ENCODE measurements at regions of chr9 and their contacts with region 1.

Region 1: GRCh38 chr9:16543686-16544085 is 326.8 kb downstream of the BNC2 start:
- DNase-seq: no peak
- ATAC-seq: no peak
- H3K4me3 ChIP-seq: no peak overlapping the region
- H3K27ac ChIP-seq: no peak overlapping the region
- H3K4me1 ChIP-seq: no peaks in the 10 kb centered on the region
- H3K27me3 ChIP-seq: no peaks in the 10 kb centered on the region
- CTCF ChIP-seq: no peak
- EP300 ChIP-seq: no peak
- POLR2A ChIP-seq: no peak
- RAD21 ChIP-seq: no peak

Region 2: GRCh38 chr9:16289639-16290038 is 254.0 kb before region 1 on chr9:
- CTCF ChIA-PET with region 1: no interaction called
- POLR2A ChIA-PET with region 1: no interaction called
- RAD21 ChIA-PET with region 1: no interaction called
- SMC1A ChIA-PET with region 1: no interaction called
- in situ Hi-C with region 1: no loop called
- intact Hi-C with region 1: no loop called
- DNase-seq: peak; percentile 31
- ATAC-seq: peak; percentile 41; the same call in 2 of the 3 replicates
- H3K4me3 ChIP-seq: no peak overlapping the region
- H3K27ac ChIP-seq: no peak overlapping the region
- H3K4me1 ChIP-seq: no peaks in the 10 kb centered on the region; the same call in 1 of the 2 replicates
- H3K27me3 ChIP-seq: no peaks in the 10 kb centered on the region
- CTCF ChIP-seq: no peak
- EP300 ChIP-seq: no peak
- POLR2A ChIP-seq: no peak
- RAD21 ChIP-seq: no peak

Region 3: GRCh38 chr9:16368237-16369087 is 175.2 kb before region 1 on chr9:
- CTCF ChIA-PET with region 1: no interaction called
- POLR2A ChIA-PET with region 1: no interaction called
- RAD21 ChIA-PET with region 1: no interaction called
- SMC1A ChIA-PET with region 1: no interaction called
- in situ Hi-C with region 1: no loop called
- intact Hi-C with region 1: no loop called
- DNase-seq: no peak
- ATAC-seq: no peak
- H3K4me3 ChIP-seq: no peak overlapping the region
- H3K27ac ChIP-seq: no peak overlapping the region
- H3K4me1 ChIP-seq: no peaks in the 10 kb centered on the region
- H3K27me3 ChIP-seq: no peaks in the 10 kb centered on the region; a peak in 1 of 4 replicates
- CTCF ChIP-seq: no peak
- EP300 ChIP-seq: no peak
- POLR2A ChIP-seq: no peak
- RAD21 ChIP-seq: no peak

Region 4: GRCh38 chr9:16530669-16531642 is 12.7 kb before region 1 on chr9:
- CTCF ChIA-PET with region 1: interaction called, 6 read pairs
- POLR2A ChIA-PET with region 1: interaction called, 3 read pairs
- RAD21 ChIA-PET with region 1: interaction called, 3 read pairs
- SMC1A ChIA-PET with region 1: interaction called, 10 read pairs
- in situ Hi-C with region 1: no loop called
- intact Hi-C with region 1: no loop called
- DNase-seq: no peak
- ATAC-seq: no peak; the same call in 1 of the 3 replicates
- H3K4me3 ChIP-seq: no peak overlapping the region
- H3K27ac ChIP-seq: no peak overlapping the region
- H3K4me1 ChIP-seq: no peaks in the 10 kb centered on the region
- H3K27me3 ChIP-seq: no peaks in the 10 kb centered on the region
- CTCF ChIP-seq: no peak
- EP300 ChIP-seq: no peak
- POLR2A ChIP-seq: no peak
- RAD21 ChIP-seq: no peak

Region 5: DNA sequence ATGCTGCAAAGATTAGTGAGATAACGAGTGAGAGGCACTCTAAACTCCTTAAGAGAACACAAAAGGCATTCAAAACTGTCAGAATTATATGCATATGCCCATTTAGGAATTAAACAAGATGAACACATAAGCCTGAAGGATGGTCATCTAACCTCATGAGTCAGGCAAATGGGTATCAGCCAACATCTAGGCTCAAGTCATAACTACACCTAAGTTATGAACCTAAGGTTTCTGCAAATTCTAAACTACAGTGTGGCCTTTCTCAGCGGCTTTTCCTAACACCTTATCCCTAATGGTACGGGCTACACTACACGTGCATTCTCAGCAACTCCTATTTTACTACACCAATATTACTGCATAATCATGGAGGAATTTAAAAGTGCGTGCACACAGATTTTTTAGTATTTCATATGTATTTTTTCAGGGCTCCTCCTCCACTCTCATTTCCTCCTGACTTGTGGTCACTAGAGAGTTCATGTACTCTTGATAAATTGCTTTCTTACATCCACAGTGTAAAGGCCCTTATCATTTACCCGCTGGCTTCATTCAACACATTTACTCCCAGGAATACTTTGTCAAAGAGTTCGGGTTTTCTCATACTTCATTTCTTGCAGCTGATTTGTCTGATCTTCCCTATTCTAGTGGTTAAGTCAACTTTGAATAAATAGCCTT is 10.3 kb after region 1 on chr9:
- CTCF ChIA-PET with region 1: interaction called, 5 read pairs
- POLR2A ChIA-PET with region 1: no interaction called
- RAD21 ChIA-PET with region 1: interaction called, 8 read pairs
- SMC1A ChIA-PET with region 1: interaction called, 16 read pairs
- in situ Hi-C with region 1: no loop called
- intact Hi-C with region 1: no loop called
- DNase-seq: no peak
- ATAC-seq: peak; percentile 76
- H3K4me3 ChIP-seq: no peak overlapping the region
- H3K27ac ChIP-seq: no peak overlapping the region
- H3K4me1 ChIP-seq: no peaks in the 10 kb centered on the region
- H3K27me3 ChIP-seq: no peaks in the 10 kb centered on the region
- CTCF ChIP-seq: no peak
- EP300 ChIP-seq: no peak
- POLR2A ChIP-seq: no peak
- RAD21 ChIP-seq: no peak

Region 6: DNA sequence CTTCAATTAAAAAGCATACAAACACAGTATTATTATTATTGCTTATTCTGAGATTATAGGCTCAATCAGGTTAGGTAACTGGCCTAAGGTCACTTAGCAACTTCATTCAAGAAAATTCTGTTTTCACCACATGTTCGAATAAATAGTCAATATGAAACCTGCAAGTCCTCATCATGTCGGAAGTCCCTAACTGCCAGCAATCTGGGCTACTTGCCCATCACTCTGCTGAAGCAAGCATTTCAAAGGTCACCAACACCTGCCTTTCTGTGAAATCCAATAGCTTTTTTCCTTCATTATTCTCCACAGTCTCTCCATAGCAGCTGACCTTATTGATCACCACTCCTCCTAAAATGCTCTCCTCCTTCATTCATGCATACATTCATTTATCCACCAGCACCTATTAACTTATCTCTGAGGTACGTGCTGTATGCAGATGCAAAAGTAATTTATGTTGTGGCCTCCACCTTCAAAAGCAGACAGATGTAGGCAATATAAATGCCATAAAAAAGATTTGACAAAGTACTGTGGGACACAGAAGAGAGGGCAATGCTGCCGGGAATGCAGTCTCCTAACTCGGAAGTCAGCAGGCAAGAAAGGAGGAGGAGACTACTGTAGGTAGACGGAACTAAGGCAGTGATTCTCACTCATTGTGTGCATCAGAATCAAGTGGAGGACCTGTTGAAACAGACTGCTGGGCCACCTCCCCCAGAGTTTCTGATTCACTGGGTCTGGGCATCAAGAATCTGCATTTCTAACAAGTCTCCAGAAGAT is 15.9 kb after region 1 on chr9:
- CTCF ChIA-PET with region 1: interaction called, 5 read pairs
- POLR2A ChIA-PET with region 1: no interaction called
- RAD21 ChIA-PET with region 1: interaction called, 8 read pairs
- SMC1A ChIA-PET with region 1: interaction called, 16 read pairs
- in situ Hi-C with region 1: no loop called
- intact Hi-C with region 1: no loop called
- DNase-seq: no peak
- ATAC-seq: peak; percentile 85
- H3K4me3 ChIP-seq: no peak overlapping the region
- H3K27ac ChIP-seq: no peak overlapping the region
- H3K4me1 ChIP-seq: no peaks in the 10 kb centered on the region
- H3K27me3 ChIP-seq: no peaks in the 10 kb centered on the region
- CTCF ChIP-seq: no peak
- EP300 ChIP-seq: 0 out of 4 replicates have a peak, but pooled peaks of 1 of the 2 experiments have one; percentile 37
- POLR2A ChIP-seq: no peak
- RAD21 ChIP-seq: no peak

Region 7: DNA sequence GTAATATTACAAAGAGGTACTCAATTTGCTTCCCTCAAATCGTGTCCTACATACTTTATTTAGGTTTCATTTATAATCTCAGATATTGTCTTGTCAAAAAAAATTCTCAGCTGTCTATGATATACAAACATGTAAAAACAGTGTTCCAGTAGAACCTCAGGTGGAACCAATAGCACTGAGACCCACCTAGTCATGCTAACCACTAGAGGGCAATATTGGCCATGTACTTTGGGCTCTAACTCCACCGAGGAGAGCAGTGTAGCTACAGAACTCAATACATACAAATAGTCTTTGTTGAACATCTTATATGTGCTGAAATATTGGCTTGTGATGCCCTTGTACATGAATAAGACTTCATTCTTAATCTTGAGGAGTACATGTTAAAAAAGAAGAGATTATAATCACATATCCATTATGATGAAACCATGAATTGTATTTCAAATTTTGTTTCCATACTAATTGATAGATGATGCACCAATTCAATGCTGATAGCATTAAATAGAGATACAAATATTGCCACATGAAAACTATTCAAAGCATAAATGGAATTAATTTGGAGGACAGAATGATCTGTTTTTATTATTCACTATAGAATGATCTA is 519.9 kb after region 1 on chr9:
- CTCF ChIA-PET with region 1: no interaction called
- POLR2A ChIA-PET with region 1: no interaction called
- RAD21 ChIA-PET with region 1: no interaction called
- SMC1A ChIA-PET with region 1: no interaction called
- in situ Hi-C with region 1: no loop called
- intact Hi-C with region 1: no loop called
- DNase-seq: no peak
- ATAC-seq: peak; percentile 95
- H3K4me3 ChIP-seq: no peak overlapping the region
- H3K27ac ChIP-seq: no peak overlapping the region
- H3K4me1 ChIP-seq: no peaks in the 10 kb centered on the region
- H3K27me3 ChIP-seq: no peaks in the 10 kb centered on the region
- CTCF ChIP-seq: peak; percentile 56 to 63 (median 58)
- EP300 ChIP-seq: no peak
- POLR2A ChIP-seq: no peak
- RAD21 ChIP-seq: peak; percentile 54

Measured in GM12878 (cell line).